ENCODE measurements at regions of chr15 and their contacts with region 1.

Region 1: DNA sequence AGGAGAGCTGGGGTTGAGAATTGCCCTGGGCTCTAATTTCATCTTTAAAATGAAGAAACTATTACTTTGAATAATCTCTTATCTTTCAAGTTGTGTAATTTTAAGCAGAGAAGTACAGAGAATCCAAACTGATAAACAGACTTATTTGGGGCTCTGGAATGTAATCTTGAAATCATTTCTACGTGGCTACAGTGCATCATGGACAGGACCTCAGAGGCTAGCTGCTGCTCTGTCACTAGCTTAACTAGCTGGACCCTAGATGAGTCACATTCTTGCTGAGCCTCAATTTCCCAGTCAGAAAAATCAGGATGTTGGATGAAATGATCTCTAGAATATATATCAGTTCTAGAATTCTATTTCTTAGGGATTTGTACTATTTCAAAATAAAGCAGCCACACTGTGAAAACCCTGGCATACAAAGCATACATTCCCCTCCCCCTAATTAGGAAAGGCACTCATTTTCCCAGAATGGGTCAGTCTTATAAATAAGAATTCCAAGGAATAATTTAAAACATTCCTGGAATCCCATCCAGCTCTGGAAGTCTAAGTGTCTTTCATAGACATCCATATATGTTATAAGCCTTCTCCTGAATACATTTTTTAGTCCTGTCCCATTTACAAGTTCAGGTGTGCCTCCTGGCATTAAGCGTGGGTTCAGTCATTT is 47.2 kb downstream of the RASGRP1 start:
- DNase-seq: peak; percentile 77
- ATAC-seq: peak; percentile 79
- H3K4me3 ChIP-seq: no peak overlapping the region
- H3K27ac ChIP-seq: no peak overlapping the region
- H3K4me1 ChIP-seq: peaks cover 10% of the 10 kb centered on the region
- H3K27me3 ChIP-seq: no peaks in the 10 kb centered on the region
- CTCF ChIP-seq: no peak
- POLR2A ChIP-seq: no peak
- RAD21 ChIP-seq: no peak

Region 2: DNA sequence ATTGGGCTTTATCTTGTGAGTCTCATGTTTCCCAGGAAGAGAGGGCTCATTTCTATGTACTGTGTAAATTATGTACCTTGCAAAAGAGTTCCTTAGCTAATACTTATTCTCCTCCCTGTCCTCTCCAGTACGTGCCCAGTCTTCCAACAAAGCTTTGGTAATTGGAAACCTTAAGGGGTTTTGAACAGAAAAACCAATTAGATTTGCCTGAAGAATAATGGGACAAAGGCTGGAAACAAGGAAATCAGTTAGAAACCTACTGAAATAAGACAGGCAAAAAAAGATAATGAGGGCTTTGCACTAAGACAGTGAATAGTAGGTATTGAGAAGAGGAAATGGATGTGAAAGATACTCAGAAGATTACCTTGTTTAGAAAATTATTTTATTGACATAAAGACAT is 182.3 kb before region 1 on chr15:
- CTCF ChIA-PET with region 1: no interaction called
- POLR2A ChIA-PET with region 1: no interaction called
- dilution Hi-C with region 1: no loop called
- in situ Hi-C with region 1: no loop called
- intact Hi-C with region 1: no loop called
- DNase-seq: no peak
- ATAC-seq: no peak
- H3K4me3 ChIP-seq: no peak overlapping the region
- H3K27ac ChIP-seq: no peak overlapping the region
- H3K4me1 ChIP-seq: no peaks in the 10 kb centered on the region
- H3K27me3 ChIP-seq: no peaks in the 10 kb centered on the region
- CTCF ChIP-seq: no peak
- POLR2A ChIP-seq: no peak
- RAD21 ChIP-seq: no peak

Region 3: DNA sequence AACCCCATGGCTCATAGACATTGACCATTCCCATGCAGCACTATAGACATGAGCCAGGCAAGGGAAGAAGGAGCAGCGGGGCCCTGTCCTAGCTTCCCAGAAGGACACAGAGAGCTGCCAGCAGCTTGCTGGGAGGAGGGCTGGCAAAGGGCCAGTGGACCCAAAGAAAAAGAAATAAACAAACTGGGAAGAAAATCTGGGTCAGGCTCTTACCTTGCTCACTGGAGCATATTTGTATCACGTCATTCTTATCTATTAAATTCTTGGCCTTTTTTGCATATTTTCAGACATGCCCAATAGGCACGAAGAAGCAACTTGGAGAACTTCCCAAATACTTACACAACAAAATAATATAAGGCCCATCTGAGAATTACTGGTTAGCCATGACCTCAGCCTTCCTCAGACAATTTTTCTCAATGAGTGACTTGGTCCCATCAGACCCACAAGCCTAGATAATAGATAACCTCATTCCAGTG is 18.8 kb after region 1 on chr15:
- CTCF ChIA-PET with region 1: no interaction called
- POLR2A ChIA-PET with region 1: no interaction called
- dilution Hi-C with region 1: no loop called
- in situ Hi-C with region 1: no loop called
- intact Hi-C with region 1: loop called (anchors 2 kb)
- DNase-seq: peak; percentile 96
- ATAC-seq: peak; percentile 84
- H3K4me3 ChIP-seq: no peak overlapping the region
- H3K27ac ChIP-seq: peak overlapping the region; percentile 36; the same call in 1 of the 2 replicates
- H3K4me1 ChIP-seq: peaks cover 15% of the 10 kb centered on the region
- H3K27me3 ChIP-seq: no peaks in the 10 kb centered on the region
- CTCF ChIP-seq: no peak
- POLR2A ChIP-seq: no peak
- RAD21 ChIP-seq: no peak

Region 4: DNA sequence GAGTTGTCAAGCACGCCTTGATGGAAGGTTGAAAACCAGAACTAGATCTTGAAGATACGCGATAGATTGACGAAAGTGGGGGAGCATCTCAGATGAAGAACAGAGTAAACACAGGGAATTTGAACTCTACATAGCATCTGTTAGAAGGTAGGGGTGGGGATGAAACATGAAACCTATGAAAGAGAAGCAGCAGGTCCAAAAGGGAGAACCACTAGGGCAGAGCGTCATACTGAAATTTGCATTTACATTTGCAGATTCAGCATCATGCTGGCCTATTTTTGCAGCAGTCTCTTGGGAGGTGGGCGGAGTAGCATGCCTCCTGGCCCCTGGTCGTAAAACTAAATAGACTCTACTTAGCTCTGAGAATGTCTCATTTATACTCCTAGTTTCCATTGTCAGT is 93.3 kb after region 1 on chr15:
- CTCF ChIA-PET with region 1: no interaction called
- POLR2A ChIA-PET with region 1: no interaction called
- dilution Hi-C with region 1: no loop called
- in situ Hi-C with region 1: no loop called
- intact Hi-C with region 1: no loop called
- DNase-seq: no peak
- ATAC-seq: no peak
- H3K4me3 ChIP-seq: no peak overlapping the region
- H3K27ac ChIP-seq: no peak overlapping the region
- H3K4me1 ChIP-seq: no peaks in the 10 kb centered on the region
- H3K27me3 ChIP-seq: peaks cover 71% of the 10 kb centered on the region
- CTCF ChIP-seq: no peak
- POLR2A ChIP-seq: no peak
- RAD21 ChIP-seq: no peak